Activated CD8-positive, alpha-beta T cell treated with anti-CD3 and anti-CD28 coated beads for 36 hours (primary cell): ENCODE measurements at regions of chr1 and their contacts with region 1.

Region 1: DNA sequence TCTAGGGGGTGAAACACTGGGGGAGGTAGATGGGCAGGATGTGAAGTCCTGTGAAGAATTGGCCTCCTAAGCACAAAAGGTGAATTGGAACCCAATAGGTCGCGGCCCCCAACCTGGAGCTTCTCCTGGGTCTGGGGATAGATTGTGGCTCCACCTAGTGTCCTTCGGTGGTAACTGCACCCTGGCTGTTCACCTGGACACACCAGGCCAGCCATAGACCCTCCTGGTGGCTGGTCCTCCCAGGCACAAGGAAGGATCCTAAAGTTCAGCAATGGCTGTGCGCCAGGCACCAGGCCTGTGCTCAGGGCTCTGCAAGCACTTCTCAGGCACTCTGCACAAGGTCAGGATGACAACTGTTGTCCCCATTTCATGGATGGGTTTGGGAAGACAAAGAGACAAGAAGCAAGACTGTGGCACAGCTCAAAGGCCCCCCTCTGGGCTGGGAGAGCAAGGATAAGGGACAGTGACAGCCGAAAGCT is 13.5 kb downstream of the ESPN start:
- DNase-seq: peak; percentile 82
- ATAC-seq: peak; percentile 75
- H3K4me3 Mint-ChIP-seq: no peak overlapping the region
- H3K27ac Mint-ChIP-seq: no peak overlapping the region
- H3K4me1 Mint-ChIP-seq: peaks cover 4% of the 10 kb centered on the region
- H3K27me3 Mint-ChIP-seq: peaks cover 22% of the 10 kb centered on the region
- CTCF ChIP-seq: peak; percentile 93

Region 2: GRCh38 chr1:6359216-6360116 is 78.6 kb before region 1 on chr1:
- CTCF ChIA-PET with region 1: interaction called, 17 read pairs
- POLR2A ChIA-PET with region 1: no interaction called
- intact Hi-C with region 1: no loop called
- DNase-seq: peak; percentile 77
- ATAC-seq: peak; percentile 84
- H3K4me3 Mint-ChIP-seq: peak overlapping the region; percentile 46
- H3K27ac Mint-ChIP-seq: peak overlapping the region; percentile 91
- H3K4me1 Mint-ChIP-seq: peaks cover 38% of the 10 kb centered on the region
- H3K27me3 Mint-ChIP-seq: no peaks in the 10 kb centered on the region
- CTCF ChIP-seq: no peak

Region 3: DNA sequence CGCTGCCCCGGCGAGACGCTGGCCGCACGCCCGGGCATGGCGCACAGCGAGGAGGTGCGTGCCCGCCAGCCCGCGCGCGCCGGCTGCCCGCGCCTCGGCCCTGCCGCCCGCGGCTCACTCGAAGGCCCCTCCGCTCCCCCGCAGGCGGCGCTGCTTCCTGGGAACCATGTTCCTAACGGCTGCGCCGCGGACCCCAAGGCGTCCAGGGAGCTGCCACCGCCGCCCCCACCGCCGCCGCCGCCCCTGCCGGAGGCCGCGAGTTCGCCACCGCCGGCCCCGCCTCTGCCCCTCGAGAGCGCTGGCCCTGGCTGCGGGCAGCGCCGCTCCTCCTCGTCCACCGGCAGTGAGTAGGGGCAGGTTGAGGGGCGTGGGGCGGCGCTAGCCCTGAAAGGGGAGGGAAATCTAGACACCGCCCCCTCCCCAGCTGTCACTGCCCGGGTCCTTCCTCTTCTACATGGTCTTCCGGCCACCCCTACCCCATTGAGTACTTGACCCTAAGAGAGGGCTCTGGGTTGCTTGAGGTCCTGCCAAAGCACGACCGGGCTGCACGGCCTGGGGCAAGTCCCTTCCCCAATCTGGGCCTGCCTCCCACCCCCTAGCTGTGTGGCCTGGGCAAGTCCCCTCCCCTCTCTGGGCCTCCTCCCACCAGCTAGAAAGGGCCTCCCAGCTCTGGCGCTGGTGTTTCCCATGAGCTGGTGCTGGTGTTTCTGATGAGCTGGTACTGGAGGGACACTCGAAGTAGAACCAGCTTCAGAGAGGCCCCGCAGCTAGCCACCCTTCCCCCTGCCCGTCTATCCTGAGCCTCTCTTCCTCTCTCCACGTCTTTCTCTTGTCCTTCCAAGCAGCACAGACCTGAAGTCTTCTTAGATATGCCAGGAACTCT is 10.9 kb after region 1 on chr1:
- CTCF ChIA-PET with region 1: interaction called, 31 read pairs
- POLR2A ChIA-PET with region 1: interaction called, 3 read pairs
- intact Hi-C with region 1: no loop called
- DNase-seq: peak; percentile 45
- ATAC-seq: peak; percentile 54
- H3K4me3 Mint-ChIP-seq: peak overlapping the region; percentile 32
- H3K27ac Mint-ChIP-seq: no peak overlapping the region
- H3K4me1 Mint-ChIP-seq: peaks cover 29% of the 10 kb centered on the region
- H3K27me3 Mint-ChIP-seq: peaks cover 62% of the 10 kb centered on the region
- CTCF ChIP-seq: no peak

Region 4: DNA sequence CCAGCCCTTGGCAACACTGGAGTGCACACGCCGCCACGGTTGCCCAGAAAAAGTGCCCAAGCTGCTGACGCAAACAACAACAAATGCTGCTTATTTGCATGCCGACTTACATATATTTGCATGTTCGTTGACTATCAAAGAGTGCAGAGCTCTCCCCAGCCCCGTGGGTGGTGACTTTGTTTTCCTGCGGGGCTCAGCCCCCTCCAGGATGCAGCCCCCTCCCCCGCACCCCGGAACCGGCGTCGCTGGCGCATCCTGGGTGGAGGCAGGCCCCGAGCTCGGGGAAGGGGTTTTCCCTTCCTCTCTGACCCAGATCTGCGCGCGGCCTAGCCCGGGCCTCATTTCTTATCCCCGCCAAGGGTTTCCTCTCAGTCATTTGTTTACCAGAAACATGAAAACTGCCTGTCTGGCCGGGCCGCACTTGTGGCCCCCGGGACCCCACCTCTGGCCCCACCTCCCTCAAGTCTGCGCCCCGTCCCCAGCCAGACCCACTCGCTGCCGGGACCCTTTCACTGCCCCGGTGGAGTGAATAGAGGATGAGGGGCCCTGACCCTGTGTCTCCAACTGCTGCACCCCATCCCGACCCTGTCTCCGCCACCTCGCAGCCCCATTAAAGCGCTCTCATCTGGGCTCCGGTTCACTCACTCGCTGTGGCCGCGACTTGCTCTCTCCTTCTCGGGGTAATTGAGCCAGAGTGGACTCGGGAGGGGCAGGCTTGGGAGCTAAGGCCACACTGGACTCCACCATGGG is 22.4 kb after region 1 on chr1:
- CTCF ChIA-PET with region 1: interaction called, 10 read pairs
- POLR2A ChIA-PET with region 1: interaction called, 4 read pairs
- intact Hi-C with region 1: no loop called
- DNase-seq: peak; percentile 91
- ATAC-seq: peak; percentile 87
- H3K4me3 Mint-ChIP-seq: peak overlapping the region; percentile 66
- H3K27ac Mint-ChIP-seq: peak overlapping the region; percentile 93
- H3K4me1 Mint-ChIP-seq: peaks cover 50% of the 10 kb centered on the region
- H3K27me3 Mint-ChIP-seq: peaks cover 16% of the 10 kb centered on the region
- CTCF ChIP-seq: no peak